ENCODE measurements at regions of chr12 and their contacts with region 1.

Region 1: DNA sequence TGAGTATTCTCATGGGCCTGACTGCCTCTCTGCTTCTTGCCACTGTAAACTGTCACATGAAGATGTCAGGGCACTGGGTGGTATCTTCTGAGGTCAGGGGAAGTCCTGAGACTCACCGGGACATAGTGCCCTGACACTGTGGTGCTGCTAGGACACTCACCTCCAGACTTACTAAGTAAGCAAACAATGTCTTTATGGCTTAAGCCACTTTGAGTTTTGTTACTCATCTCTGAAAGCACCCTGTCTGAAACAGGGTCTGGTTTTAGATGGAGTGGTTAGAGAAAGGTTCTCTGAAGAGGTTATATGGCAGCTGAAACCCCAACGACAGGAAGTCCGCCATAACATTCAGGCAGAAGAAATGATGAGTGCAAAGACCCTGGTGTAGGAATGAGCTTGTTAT is 22.7 kb downstream of the GPR19 start:
- DNase-seq: no peak
- CTCF ChIP-seq: no peak

Region 2: GRCh38 chr12:12683725-12684124 is 10.4 kb after region 1 on chr12:
- CTCF ChIA-PET with region 1: interaction called, 20 read pairs
- POLR2A ChIA-PET with region 1: no interaction called
- DNase-seq: no peak
- CTCF ChIP-seq: no peak

Region 3: GRCh38 chr12:12800406-12800805 is 127.1 kb after region 1 on chr12:
- CTCF ChIA-PET with region 1: no interaction called
- POLR2A ChIA-PET with region 1: no interaction called
- DNase-seq: no peak
- CTCF ChIP-seq: no peak